Natural killer cell (primary cell): ENCODE measurements at regions of chr1 and their contacts with region 1.

Region 1: GRCh38 chr1:8987881-8988617 is 38.2 kb downstream of the SLC2A7 start:
- DNase-seq: peak; percentile 36 to 78
- ATAC-seq: peak; percentile 80 to 89 (median 81)
- H3K4me3 ChIP-seq: no peak overlapping the region
- H3K4me3 Mint-ChIP-seq: no peak overlapping the region
- H3K27ac ChIP-seq: no peak overlapping the region
- H3K27ac Mint-ChIP-seq: no peak overlapping the region
- H3K4me1 ChIP-seq: peaks cover 7% of the 10 kb centered on the region
- H3K4me1 Mint-ChIP-seq: peaks cover 0 to 7% of the 10 kb centered on the region in 2 donors
- H3K27me3 ChIP-seq: no peaks in the 10 kb centered on the region
- H3K27me3 Mint-ChIP-seq: peaks cover 0 to 4% of the 10 kb centered on the region in 2 donors
- CTCF ChIP-seq: peak; percentile 94

Region 2: DNA sequence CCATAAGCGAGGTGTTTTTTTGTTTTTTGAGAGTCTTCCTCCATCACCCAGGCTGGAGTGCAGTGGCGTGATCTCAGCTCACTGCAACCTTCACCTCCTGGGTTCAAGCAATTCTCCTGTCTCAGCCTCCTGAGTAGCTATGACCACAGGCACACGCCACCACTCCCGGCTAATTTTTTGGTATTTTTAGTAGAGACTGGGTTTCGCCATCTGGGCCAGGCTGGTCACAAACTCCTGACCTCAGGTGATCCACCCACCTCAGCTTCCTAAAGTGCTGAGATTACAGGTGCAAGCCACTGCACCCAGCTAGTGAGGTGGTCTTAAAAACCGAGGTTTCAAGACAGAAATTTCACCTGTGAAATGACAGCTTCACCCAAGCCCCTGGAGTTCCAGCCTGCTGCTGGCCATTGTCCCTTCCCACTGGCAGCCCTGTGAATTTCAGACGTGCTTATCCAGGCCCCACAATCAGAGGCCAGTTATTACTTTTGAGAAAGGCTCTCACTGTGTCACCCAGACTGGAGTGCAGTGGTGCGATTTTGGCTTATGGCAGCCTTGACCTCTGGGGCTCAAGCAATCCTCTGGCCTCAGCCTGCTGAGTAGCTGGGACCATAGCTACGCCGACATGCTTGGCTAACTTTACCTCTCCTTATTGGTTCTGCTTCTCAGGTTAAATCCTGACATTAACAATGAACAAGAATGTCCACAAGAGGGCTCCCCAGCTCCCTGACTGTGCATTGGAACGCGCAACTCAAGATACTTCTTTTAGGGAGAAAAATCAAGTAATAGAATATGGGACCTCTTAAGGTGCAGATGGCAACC is 129.0 kb before region 1 on chr1:
- intact Hi-C with region 1: loop called (anchors 1 kb)
- DNase-seq: peak in 1 of 2 donors; percentile 78
- ATAC-seq: peak; percentile 68 to 78 (median 75)
- H3K4me3 ChIP-seq: no peak overlapping the region
- H3K4me3 Mint-ChIP-seq: no peak overlapping the region
- H3K27ac ChIP-seq: no peak overlapping the region
- H3K27ac Mint-ChIP-seq: peak overlapping the region in 1 of 2 donors; percentile 74
- H3K4me1 ChIP-seq: peaks cover 22% of the 10 kb centered on the region
- H3K4me1 Mint-ChIP-seq: peaks cover 13 to 27% of the 10 kb centered on the region in 2 donors
- H3K27me3 ChIP-seq: no peaks in the 10 kb centered on the region
- H3K27me3 Mint-ChIP-seq: no peaks in the 10 kb centered on the region
- CTCF ChIP-seq: peak; percentile 66

Region 3: DNA sequence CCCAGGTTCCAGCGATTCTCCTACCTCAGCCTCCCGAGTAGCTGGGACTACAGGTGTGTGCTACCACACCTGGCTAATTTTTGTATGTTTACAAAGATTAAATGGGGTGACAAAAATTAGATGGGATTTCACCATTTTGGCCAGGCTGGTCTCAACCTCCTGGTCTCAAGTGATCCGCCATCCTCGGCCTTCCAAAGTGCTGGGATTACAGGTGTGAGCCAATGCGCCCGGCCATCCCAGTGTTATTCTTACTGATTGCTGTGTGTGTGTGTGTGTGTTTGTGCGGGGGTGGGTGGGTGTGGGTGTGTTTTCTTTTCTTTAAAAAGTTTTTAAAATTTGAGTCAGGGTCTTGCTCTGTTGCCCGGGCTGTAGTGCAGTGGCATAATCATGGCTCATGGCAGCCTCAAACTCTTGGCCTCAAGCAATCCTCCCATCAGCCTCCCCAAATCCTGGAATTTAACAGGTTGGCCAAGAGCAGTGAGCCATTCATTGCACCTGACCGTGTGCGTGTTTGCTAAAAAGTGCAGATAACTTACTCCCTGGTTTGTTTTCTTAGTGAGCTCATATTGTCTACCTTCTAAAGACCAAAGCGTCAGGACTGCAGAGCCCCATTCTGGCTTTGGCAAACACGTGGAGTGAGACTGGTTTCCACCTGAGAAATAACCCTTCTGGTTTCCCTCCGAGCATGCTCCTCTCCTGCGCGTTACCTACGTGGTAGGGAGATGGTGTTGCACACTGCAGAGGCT is 74.8 kb before region 1 on chr1:
- intact Hi-C with region 1: loop called (anchors 1 kb)
- DNase-seq: no peak
- ATAC-seq: no peak
- H3K4me3 ChIP-seq: no peak overlapping the region
- H3K4me3 Mint-ChIP-seq: no peak overlapping the region
- H3K27ac ChIP-seq: no peak overlapping the region
- H3K27ac Mint-ChIP-seq: no peak overlapping the region
- H3K4me1 ChIP-seq: no peaks in the 10 kb centered on the region
- H3K4me1 Mint-ChIP-seq: no peaks in the 10 kb centered on the region
- H3K27me3 ChIP-seq: no peaks in the 10 kb centered on the region
- H3K27me3 Mint-ChIP-seq: no peaks in the 10 kb centered on the region
- CTCF ChIP-seq: no peak

Region 4: DNA sequence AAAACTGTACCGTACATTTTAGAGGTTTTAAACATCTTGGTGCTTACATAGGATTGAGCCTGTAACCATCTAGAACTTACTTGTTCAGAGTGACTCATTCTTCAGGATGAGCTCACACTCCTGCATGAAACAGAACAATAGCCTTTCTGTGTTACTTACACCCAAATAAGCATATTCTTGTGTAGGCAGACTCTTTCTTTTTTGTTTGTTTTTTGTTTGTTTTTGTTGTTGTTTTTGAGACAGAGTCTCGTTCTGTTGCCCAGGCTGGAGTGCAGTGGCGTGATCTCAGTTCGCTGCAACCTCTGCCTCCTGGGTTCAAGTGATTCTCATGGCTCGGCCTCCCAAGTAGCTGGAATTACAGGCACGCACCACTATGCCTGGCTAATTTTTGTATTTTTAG is 46.1 kb before region 1 on chr1:
- intact Hi-C with region 1: no loop called
- DNase-seq: no peak
- ATAC-seq: no peak
- H3K4me3 ChIP-seq: no peak overlapping the region
- H3K4me3 Mint-ChIP-seq: no peak overlapping the region
- H3K27ac ChIP-seq: no peak overlapping the region
- H3K27ac Mint-ChIP-seq: no peak overlapping the region
- H3K4me1 ChIP-seq: peaks cover 22% of the 10 kb centered on the region
- H3K4me1 Mint-ChIP-seq: peaks cover 0 to 4% of the 10 kb centered on the region in 2 donors
- H3K27me3 ChIP-seq: no peaks in the 10 kb centered on the region
- H3K27me3 Mint-ChIP-seq: peaks cover 0 to 8% of the 10 kb centered on the region in 2 donors
- CTCF ChIP-seq: no peak